GM10248 (cell line): ENCODE measurements at regions of chr2 and their contacts with region 1.

Region 1: DNA sequence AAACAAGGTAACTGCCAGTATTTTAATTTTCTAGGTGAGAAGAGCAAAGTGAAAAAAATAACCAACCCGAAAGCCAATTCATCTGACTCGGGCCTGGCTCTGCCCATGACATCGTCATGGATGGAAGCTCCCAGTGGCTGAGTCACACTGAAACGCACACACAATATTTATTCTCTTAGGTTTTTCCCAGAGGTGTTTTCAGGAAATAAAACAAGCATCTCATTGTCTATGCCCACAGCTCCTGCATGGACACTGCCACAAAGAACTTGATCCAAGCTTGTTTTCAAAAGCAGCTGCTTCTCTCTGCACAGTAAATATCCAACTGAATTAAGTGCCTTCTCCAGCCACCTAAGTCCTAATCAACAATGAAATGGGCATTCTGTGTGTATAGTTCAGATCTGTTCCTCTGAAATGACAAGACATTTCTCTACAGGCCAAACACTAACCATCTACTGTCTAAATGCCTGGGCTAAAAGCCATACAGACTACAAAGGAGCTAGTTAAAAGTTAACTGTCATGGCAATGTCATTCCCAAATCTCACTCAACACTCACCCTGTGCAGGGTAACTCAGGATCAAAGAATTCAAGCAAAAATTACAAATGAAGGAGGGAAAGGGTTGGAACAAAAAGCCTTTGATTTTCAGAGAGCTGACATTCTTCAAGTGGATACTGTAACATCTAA is 62.9 kb downstream of the RPL31 start:
- DNase-seq: peak; percentile 41
- CTCF ChIP-seq: no peak

Region 2: DNA sequence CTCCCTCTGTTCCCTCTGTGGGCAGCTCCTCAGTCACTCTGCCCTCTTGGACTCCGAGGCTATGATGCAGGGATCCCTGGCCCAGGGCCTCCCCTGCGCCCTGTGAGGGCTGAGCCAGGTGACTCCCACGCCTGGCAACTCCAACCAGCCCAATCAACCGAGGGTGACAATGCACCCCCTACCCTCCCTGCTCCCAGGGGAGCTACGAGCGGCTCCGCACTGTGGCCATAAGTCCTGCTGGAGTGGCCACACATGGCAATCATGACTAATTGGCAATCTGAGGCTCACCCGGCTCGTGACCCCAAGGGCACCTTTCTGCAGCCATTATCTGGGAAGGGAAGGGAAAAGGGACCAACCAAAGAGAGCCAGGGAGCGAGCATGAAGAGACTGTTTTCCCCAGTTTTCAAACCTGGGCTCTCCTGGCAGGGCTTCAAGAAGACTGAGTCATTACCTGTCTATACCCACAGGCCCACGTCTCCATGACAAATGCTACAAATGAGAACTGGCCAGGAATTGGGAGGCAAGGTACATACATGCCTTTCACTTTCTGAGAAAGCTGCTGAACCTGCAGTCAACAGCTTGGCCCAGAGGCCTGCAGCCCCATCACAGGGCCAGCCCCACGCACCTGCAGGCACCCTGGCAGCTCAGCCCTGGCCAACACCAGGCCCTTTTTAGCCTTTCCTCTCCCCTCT is 17.8 kb before region 1 on chr2:
- CTCF ChIA-PET with region 1: interaction called, 11 read pairs
- POLR2A ChIA-PET with region 1: no interaction called
- DNase-seq: no peak
- CTCF ChIP-seq: no peak

Region 3: DNA sequence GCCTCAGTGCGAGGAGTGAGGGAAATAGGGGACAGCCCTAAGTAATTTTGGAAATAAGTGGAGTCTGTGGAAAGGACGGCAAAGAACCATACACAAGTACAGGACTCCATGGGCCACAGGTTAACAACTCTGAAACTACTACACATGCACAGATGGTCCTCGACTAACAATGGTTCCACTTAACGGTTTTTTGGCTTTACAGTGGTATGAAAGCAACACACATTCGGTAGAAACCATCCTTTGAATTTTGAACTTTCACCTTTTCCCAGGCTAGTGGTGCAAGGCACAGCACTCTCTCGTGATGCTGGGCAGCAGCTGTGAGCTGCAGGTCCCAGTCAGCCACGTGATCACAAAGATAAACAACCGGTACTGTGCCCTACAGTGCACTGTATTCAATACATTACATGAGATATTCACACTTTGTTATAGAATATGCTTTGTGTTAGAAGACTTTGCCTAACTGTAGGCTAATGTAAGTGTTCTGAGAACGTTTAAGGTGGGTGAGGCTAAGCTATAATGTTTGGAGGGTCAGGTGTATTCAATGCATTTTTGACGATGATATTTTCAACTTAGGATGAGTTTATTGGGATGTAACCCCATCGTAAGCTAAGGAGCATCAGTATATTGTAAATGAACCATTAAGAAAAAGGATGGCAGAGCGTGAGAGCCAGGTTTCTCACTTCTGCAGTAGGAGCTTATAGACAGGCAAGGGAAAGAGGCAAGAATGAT is 41.6 kb after region 1 on chr2:
- CTCF ChIA-PET with region 1: no interaction called
- POLR2A ChIA-PET with region 1: no interaction called
- DNase-seq: no peak
- CTCF ChIP-seq: no peak